B cell (primary cell): ENCODE measurements at regions of chr1 and their contacts with region 1.

Region 1: GRCh38 chr1:10494754-10495474 is 20.2 kb downstream of the PEX14 start:
- DNase-seq: peak; percentile 86
- ATAC-seq: peak; percentile 89
- H3K4me3 ChIP-seq: peak overlapping the region; percentile 36 to 77 (median 62)
- H3K4me3 Mint-ChIP-seq: peak overlapping the region; percentile 89
- H3K27ac ChIP-seq: peak overlapping the region; percentile 87 to 93
- H3K27ac Mint-ChIP-seq: peak overlapping the region; percentile 93
- H3K4me1 ChIP-seq: peaks cover 12 to 18% of the 10 kb centered on the region in 2 donors
- H3K4me1 Mint-ChIP-seq: peaks cover 26% of the 10 kb centered on the region
- H3K27me3 ChIP-seq: no peaks in the 10 kb centered on the region
- H3K27me3 Mint-ChIP-seq: no peaks in the 10 kb centered on the region
- CTCF ChIP-seq: peak; percentile 100

Region 2: DNA sequence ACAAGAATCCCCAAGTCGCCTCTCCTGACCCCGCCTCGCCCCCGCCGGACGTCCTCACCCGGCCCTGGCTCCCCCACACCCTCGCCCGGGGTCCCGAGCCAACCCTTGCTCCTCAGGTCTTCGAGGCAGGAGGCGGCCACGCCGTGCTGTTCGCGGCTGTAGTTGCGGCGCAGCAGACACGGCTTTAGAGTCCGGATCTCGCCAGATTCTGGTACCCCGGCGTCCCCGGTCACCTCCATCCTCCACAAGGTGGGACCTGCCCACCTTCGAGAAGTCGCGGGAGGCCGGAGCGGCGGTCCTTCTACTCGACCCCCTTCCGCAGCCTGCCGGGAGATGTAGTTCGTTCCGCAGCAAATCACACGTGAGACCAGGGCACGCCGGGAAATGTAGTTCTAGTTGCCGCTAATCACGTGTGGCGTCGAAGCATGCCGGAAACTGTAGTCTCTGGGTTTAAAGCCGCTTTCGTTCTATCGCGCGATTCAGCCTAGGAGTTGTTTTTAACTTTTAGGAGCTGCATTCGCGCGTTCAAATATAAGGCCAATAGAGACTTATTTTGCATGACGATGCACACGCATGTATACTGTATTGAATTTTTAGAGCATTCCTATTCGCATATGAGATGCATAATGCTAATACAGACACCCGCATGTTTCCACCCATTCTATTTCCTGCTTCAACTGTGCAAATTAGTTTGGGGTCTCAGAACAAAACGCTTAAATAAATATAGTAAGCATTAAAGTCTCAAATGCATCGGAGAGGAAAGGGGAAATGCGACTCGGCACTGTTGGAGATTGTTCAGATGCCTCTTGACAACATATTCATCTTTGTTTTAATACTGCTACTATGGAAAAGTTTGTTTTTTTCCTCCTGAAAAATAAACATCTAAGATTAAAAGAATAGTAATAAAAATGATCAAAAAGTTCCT is 22.4 kb before region 1 on chr1 and contains the start of gene DFFA:
- CTCF ChIA-PET with region 1: interaction called, 20 read pairs
- POLR2A ChIA-PET with region 1: no interaction called
- intact Hi-C with region 1: loop called (anchors 1 kb)
- DNase-seq: peak; percentile 94
- ATAC-seq: peak; percentile 81
- H3K4me3 ChIP-seq: peak within 1 kb of the TSS; percentile 58 to 84 (median 80)
- H3K4me3 Mint-ChIP-seq: peak within 1 kb of the TSS; percentile 87
- H3K27ac ChIP-seq: peak within 1 kb of the TSS; percentile 38 to 74
- H3K27ac Mint-ChIP-seq: peak within 1 kb of the TSS; percentile 88
- H3K4me1 ChIP-seq: peaks cover 34 to 44% of the 10 kb centered on the region in 2 donors
- H3K4me1 Mint-ChIP-seq: peaks cover 46% of the 10 kb centered on the region
- H3K27me3 ChIP-seq: no peaks in the 10 kb centered on the region
- H3K27me3 Mint-ChIP-seq: no peaks in the 10 kb centered on the region
- CTCF ChIP-seq: no peak
- total RNA-seq, gene DFFA: 28.2 and 30.7 TPM in 2 replicates

Region 3: DNA sequence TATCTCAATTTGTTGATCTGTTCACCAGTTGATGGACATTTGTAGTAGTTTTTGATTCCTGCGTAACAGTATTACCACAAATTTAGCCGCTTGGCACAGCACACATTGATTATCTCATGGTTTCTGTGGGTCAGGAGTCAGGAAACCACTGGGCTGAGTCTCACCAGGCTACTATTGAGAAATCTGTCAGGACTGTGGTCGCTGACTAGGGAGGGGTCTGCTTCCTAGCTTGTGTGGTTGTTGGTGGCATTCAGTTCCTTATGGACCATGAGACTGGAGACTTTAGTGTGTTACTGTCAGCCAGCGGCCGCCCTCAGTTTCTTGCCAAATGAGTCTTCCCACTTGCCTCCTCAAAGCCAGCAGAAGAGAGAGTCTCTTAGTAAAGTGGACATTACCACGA is 10.4 kb before region 1 on chr1:
- CTCF ChIA-PET with region 1: interaction called, 20 read pairs
- POLR2A ChIA-PET with region 1: no interaction called
- intact Hi-C with region 1: no loop called
- DNase-seq: no peak
- ATAC-seq: no peak
- H3K4me3 ChIP-seq: no peak overlapping the region
- H3K4me3 Mint-ChIP-seq: no peak overlapping the region
- H3K27ac ChIP-seq: no peak overlapping the region
- H3K27ac Mint-ChIP-seq: no peak overlapping the region
- H3K4me1 ChIP-seq: no peaks in the 10 kb centered on the region
- H3K4me1 Mint-ChIP-seq: peaks cover 3% of the 10 kb centered on the region
- H3K27me3 ChIP-seq: no peaks in the 10 kb centered on the region
- H3K27me3 Mint-ChIP-seq: no peaks in the 10 kb centered on the region
- CTCF ChIP-seq: no peak

Region 4: DNA sequence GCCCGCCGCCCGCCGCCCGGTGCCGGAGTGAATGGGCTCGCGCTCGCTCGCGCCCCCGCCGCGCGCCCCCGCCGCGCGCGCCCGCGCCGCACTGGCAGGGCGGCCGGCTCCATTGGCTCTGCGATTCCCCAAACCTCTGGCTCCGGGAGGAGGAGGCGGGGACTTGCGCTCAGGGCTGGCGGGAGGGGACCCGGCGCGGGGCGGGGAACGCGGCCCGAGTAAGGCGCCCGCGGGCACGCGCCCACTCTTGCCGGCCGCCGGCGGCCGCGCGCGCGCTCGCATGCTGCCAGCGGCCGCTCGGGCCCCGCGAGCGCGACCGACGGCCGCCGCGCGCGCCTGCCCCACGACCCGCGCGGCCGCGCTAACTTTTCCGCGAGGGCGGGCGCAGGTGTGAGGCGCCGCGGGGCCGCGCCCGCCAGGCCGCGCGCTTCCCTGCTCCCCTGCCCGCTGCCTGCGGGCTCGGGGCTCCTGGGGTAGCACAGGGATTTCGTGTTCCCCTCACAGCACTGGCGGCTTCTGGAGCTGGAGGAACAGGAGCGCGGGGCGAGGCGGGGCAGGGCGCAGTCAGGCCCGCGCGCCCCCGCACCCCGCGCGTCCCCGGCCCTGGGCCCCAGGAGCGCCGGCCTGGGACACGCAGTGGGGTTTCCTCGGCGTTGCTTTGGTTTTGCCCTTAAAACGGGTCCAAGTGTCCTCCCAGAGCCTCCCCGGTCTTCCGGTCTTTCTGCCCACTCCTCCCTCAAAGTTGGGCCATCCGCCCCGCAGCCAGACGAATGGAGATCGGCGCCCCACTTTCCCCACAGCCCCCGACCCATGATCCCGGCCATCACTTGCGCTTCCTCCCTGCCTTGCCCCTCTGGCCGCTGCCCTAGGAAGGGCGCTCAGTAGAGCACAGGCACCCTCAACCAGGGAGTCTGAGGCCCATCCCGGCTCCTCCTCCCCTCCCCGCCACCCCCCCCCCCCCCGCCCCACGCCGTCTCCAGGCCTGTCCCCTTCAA is 200.0 kb after region 1 on chr1:
- CTCF ChIA-PET with region 1: interaction called, 9 read pairs
- POLR2A ChIA-PET with region 1: no interaction called
- intact Hi-C with region 1: loop called (anchors 2 kb)
- DNase-seq: peak; percentile 92
- ATAC-seq: peak; percentile 73
- H3K4me3 ChIP-seq: peak overlapping the region in 4 of 5 experiments; percentile 24 to 63 (median 50)
- H3K4me3 Mint-ChIP-seq: peak overlapping the region; percentile 87
- H3K27ac ChIP-seq: peak overlapping the region in 1 of 2 donors; percentile 68
- H3K27ac Mint-ChIP-seq: peak overlapping the region; percentile 85
- H3K4me1 ChIP-seq: peaks cover 16 to 24% of the 10 kb centered on the region in 2 donors
- H3K4me1 Mint-ChIP-seq: peaks cover 19% of the 10 kb centered on the region
- H3K27me3 ChIP-seq: no peaks in the 10 kb centered on the region
- H3K27me3 Mint-ChIP-seq: peaks cover 8% of the 10 kb centered on the region
- CTCF ChIP-seq: no peak

Region 5: GRCh38 chr1:10909697-10910671 is 415.1 kb after region 1 on chr1:
- CTCF ChIA-PET with region 1: interaction called, 16 read pairs
- POLR2A ChIA-PET with region 1: no interaction called
- intact Hi-C with region 1: loop called (anchors 1 kb)
- DNase-seq: peak; percentile 61
- ATAC-seq: peak; percentile 58
- H3K4me3 ChIP-seq: no peak overlapping the region
- H3K4me3 Mint-ChIP-seq: no peak overlapping the region
- H3K27ac ChIP-seq: no peak overlapping the region
- H3K27ac Mint-ChIP-seq: no peak overlapping the region
- H3K4me1 ChIP-seq: peaks cover under 1 to 5% of the 10 kb centered on the region in 2 donors
- H3K4me1 Mint-ChIP-seq: peaks cover 1% of the 10 kb centered on the region
- H3K27me3 ChIP-seq: peaks cover 0 to 6% (median 0%) of the 10 kb centered on the region in 4 experiments
- H3K27me3 Mint-ChIP-seq: peaks cover 20% of the 10 kb centered on the region
- CTCF ChIP-seq: peak; percentile 64